ENCODE measurements at regions of chr10 and their contacts with region 1.

Region 1: DNA sequence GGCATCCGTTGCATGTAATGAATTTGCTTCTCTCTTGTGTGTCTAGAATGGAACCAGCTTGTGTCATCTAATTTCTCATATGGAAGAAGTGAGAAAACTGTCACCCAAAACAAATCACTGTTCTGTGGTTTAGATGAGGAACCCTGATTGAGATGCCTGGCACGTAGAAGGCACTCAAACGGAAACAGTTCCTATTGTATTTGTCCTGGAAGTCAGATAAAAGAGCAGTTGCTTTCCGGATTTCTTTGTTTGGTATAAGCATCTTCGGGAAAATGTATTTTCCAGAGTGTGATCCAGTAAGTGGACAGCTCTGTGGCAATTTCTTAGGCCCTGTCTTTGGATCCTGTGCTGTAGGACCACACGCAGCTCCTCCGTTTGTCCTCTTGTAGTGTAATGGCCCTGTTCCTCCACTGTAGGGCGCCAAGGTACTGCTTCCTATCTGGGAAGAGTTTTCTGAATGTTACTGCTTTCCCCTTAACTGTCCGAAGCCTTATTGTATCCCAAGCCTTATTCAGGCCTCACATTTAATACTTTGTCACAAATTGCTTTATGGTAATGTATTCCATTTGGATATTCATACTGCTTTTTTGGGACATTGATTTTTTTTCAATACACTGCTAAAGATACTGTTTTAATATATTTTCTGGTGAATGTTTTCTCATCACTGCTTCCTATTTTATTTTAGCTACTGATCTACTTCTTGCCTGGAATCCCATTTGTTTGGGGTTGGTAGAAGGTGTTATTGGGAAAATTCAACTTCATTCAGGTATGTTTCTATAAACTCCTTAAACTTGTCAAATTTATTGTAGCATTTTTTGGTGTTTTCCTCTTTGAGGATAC is 24.8 kb downstream of the INPP5F start:
- DNase-seq: peak; percentile 36
- H3K4me3 ChIP-seq: no peak overlapping the region
- CTCF ChIP-seq: peak; percentile 90

Region 2: DNA sequence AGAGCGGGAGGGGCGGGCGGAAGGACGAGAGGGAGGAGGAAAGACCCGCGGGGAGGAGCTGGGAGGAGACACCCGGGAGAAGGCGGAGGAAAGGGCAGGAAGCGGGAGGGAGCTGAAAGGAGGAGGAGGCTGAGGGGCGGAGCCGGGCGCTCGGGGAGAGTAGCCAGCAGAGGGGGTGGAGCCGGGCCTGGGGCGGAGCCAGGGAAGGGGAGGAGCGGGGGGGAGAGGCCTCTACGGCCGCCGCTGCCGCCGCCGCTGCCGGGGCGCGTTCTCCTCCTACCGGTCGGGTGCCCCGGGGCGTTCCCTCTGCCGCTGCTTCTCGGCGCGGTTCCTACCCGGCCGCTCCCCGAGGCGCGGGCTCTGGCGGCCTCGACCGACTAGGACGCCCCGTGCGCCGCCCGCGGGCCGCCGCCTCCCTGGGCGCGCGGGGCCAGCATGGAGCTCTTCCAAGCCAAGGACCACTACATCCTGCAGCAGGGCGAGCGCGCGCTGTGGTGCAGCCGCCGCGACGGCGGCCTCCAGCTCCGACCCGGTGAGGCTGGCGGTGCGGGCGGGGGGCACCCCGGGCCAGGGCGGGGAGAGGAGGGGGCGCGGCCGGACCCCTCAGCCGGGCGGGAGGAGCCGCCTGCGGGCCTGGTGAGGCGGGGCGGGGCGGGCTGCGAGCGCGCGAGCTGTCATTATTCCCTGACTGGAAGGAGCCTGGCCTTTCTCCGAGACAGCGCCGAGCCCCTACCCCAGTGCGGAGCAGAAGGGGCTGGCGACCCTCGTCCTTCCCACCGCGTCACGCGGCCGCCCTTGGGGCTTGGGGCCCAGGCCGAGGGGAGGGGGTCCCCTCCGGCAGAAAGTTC is 24.6 kb before region 1 on chr10 and contains the start of gene INPP5F:
- CTCF ChIA-PET with region 1: interaction called, 11 read pairs
- POLR2A ChIA-PET with region 1: no interaction called
- DNase-seq: peak; percentile 73
- H3K4me3 ChIP-seq: peak within 1 kb of the TSS; percentile 69
- CTCF ChIP-seq: peak; percentile 36

Region 3: GRCh38 chr10:119769886-119770285 is 19.3 kb after region 1 on chr10:
- CTCF ChIA-PET with region 1: interaction called, 81 read pairs
- POLR2A ChIA-PET with region 1: no interaction called
- DNase-seq: no peak
- H3K4me3 ChIP-seq: no peak overlapping the region
- CTCF ChIP-seq: no peak

Region 4: GRCh38 chr10:119834188-119834587 is 83.6 kb after region 1 on chr10:
- CTCF ChIA-PET with region 1: interaction called, 29 read pairs
- POLR2A ChIA-PET with region 1: no interaction called
- DNase-seq: no peak
- H3K4me3 ChIP-seq: no peak overlapping the region
- CTCF ChIP-seq: no peak

Region 5: GRCh38 chr10:119892188-119893065 is 141.8 kb after region 1 on chr10 and contains the start of gene SEC23IP:
- CTCF ChIA-PET with region 1: interaction called, 19 read pairs
- POLR2A ChIA-PET with region 1: no interaction called
- DNase-seq: peak; percentile 74
- H3K4me3 ChIP-seq: peak within 1 kb of the TSS; percentile 97
- CTCF ChIP-seq: no peak

Measured in AG04449 (cell line).